ENCODE measurements at regions of chr12 and their contacts with region 1.

Region 1: GRCh38 chr12:69359531-69360347 is at the start of gene YEATS4:
- DNase-seq: peak; percentile 95
- H3K4me3 Mint-ChIP-seq: peak within 1 kb of the TSS; percentile 83
- H3K27ac Mint-ChIP-seq: peak within 1 kb of the TSS; percentile 84
- H3K4me1 Mint-ChIP-seq: peaks cover 15% of the 10 kb centered on the region
- H3K27me3 Mint-ChIP-seq: peaks cover 6% of the 10 kb centered on the region
- CTCF ChIP-seq: no peak
- total RNA-seq, gene YEATS4: 26.1 and 30.9 TPM in 2 replicates

Region 2: DNA sequence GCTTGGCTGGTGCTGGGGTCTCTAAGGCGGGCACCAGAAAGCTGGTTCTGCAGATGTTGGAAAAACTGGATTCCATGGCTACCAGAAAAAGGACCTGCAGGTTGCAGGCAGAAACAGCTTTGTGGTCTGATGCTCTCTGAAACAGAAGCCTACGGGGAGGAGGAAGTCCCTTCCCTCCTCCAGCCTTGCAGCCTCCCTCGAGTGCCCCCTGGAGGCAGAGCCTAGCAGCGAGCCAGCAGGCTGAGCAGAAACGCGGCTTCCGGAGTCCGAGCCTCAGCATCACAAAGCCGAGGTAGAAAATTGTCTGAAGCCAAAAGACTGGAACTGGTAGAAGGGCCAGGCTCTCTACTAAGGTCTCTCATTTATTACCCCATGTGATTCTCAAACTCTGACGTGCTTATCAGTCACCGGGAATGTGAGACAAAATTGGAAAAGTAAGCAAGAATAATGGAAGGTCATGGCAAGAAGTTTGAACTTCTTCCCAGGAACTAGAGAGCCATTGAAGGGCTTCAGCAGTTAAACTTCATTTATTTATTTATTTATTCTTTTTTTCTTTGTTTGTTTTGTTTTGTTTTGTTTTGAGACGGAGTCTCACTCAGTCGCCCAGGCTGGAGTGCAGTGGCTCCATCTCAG is 202.6 kb before region 1 on chr12:
- CTCF ChIA-PET with region 1: interaction called, 3 read pairs
- POLR2A ChIA-PET with region 1: no interaction called
- intact Hi-C with region 1: loop called (anchors 2 kb)
- DNase-seq: peak; percentile 71
- H3K4me3 Mint-ChIP-seq: no peak overlapping the region
- H3K27ac Mint-ChIP-seq: no peak overlapping the region
- H3K4me1 Mint-ChIP-seq: peaks cover 11% of the 10 kb centered on the region
- H3K27me3 Mint-ChIP-seq: no peaks in the 10 kb centered on the region
- CTCF ChIP-seq: peak; percentile 63

Region 3: DNA sequence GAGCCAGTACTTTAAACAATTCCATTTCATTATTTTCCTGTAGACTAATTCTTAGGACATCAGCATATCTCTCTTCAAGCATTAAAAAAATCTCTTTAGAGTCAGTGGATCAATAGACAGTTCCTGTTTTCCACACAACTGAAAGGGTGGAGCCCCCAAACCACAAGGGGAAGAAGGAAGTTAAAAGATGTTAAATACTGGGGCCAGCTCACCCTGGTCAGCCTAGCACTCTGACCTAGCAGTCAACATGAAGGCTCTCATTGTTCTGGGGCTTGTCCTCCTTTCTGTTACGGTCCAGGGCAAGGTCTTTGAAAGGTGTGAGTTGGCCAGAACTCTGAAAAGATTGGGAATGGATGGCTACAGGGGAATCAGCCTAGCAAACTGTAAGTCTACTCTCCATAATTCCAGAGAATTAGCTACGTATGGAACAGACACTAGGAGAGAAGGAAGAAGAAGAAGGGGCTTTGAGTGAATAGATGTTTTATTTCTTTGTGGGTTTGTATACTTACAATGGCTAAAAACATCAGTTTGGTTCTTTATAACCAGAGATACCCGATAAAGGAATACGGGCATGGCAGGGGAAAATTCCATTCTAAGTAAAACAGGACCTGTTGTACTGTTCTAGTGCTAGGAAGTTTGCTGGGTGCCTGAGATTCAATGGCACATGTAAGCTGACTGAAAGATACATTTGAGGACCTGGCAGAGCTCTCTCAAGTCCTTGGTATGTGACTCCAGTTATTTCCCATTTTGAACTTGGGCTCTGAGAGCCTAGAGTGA is 11.4 kb before region 1 on chr12 and contains the start of gene LYZ:
- CTCF ChIA-PET with region 1: interaction called, 13 read pairs
- POLR2A ChIA-PET with region 1: no interaction called
- intact Hi-C with region 1: no loop called
- DNase-seq: no peak
- H3K4me3 Mint-ChIP-seq: no peak within 1 kb of the TSS
- H3K27ac Mint-ChIP-seq: no peak within 1 kb of the TSS
- H3K4me1 Mint-ChIP-seq: no peaks in the 10 kb centered on the region
- H3K27me3 Mint-ChIP-seq: no peaks in the 10 kb centered on the region
- CTCF ChIP-seq: no peak
- total RNA-seq, gene LYZ: not detected in 2 replicates

Region 4: DNA sequence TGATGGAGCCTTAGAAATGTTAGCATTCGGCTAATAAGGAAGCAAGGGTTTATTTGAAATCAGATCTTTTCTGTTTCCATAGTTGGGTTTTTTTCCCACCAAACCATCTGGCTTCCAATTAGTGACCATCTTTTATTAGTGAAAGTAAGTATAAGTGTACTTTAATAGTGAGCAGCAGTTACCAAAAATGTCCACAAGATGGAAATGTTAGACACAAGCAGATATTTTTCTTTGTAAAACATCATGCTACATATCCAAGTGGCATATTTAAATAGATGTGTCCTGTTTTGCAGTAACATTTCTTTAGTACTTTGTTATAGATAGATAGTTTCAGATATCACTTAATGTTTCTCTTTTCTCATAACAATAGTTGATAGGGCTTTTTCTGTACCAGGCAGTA is 28.6 kb after region 1 on chr12:
- CTCF ChIA-PET with region 1: interaction called, 17 read pairs
- POLR2A ChIA-PET with region 1: interaction called, 4 read pairs
- intact Hi-C with region 1: no loop called
- DNase-seq: peak; percentile 42
- H3K4me3 Mint-ChIP-seq: no peak overlapping the region
- H3K27ac Mint-ChIP-seq: no peak overlapping the region
- H3K4me1 Mint-ChIP-seq: peaks cover 6% of the 10 kb centered on the region
- H3K27me3 Mint-ChIP-seq: no peaks in the 10 kb centered on the region
- CTCF ChIP-seq: peak; percentile 53

Region 5: GRCh38 chr12:69457433-69457832 is 97.7 kb after region 1 on chr12:
- CTCF ChIA-PET with region 1: no interaction called
- POLR2A ChIA-PET with region 1: no interaction called
- intact Hi-C with region 1: no loop called
- DNase-seq: no peak
- H3K4me3 Mint-ChIP-seq: no peak overlapping the region
- H3K27ac Mint-ChIP-seq: no peak overlapping the region
- H3K4me1 Mint-ChIP-seq: no peaks in the 10 kb centered on the region
- H3K27me3 Mint-ChIP-seq: no peaks in the 10 kb centered on the region
- CTCF ChIP-seq: no peak

Region 6: GRCh38 chr12:69585189-69586062 is 225.7 kb after region 1 on chr12 and contains the start of gene CCT2:
- CTCF ChIA-PET with region 1: interaction called, 3 read pairs
- POLR2A ChIA-PET with region 1: interaction called, 3 read pairs
- intact Hi-C with region 1: loop called (anchors 1 kb)
- DNase-seq: peak; percentile 94
- H3K4me3 Mint-ChIP-seq: peak within 1 kb of the TSS; percentile 99
- H3K27ac Mint-ChIP-seq: peak within 1 kb of the TSS; percentile 95
- H3K4me1 Mint-ChIP-seq: no peaks in the 10 kb centered on the region
- H3K27me3 Mint-ChIP-seq: no peaks in the 10 kb centered on the region
- CTCF ChIP-seq: peak; percentile 14
- total RNA-seq, gene CCT2: 161 and 212 TPM in 2 replicates

Measured in MCF 10A (cell line).